ENCODE measurements at regions of chr4 and their contacts with region 1.

Region 1: DNA sequence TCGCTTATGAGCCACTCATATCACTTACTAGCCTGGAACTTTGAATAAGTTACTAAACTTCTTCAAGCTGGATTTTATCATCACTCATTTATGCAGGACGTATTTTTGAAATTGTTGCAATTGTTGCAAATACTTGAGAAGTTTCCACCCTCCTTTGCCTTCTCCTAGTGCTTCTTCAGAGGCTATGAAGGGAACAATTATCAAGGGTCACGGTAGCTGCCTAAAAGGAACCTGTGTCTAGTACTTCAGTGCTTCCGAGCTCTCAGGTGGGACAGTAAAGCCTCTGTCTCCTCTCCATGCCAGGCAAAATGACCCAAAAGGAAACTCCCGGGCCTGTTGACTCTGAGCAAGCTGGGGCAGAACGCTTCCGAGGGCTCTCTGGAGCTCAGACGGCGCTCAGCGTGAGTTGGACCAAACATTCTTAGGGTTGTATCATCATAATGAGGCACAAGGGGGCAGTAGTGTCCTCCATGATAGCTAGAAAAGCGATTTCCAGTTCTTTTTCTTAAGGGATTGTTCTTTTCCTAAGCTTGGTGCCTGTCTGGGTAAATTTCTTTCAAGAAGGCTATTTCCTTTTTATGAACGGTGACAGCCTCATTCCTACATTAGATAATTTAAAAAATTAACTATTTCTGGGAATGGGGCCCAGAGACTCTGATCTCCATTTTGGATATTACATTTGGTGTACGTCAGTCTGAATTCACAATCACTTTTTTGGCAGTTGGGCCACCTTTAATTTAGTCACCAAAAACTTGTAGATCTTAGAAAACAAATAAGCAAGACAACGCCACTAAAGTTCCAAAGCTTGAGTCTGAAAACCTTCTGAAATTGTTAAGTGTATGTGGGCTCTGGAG is 73.1 kb downstream of the PACRGL start:
- DNase-seq: peak; percentile 15
- ATAC-seq: peak; percentile 78; the same call in 1 of the 2 replicates
- H3K4me3 ChIP-seq: no peak overlapping the region
- H3K27ac ChIP-seq: no peak overlapping the region
- H3K4me1 ChIP-seq: no peaks in the 10 kb centered on the region
- H3K27me3 ChIP-seq: no peaks in the 10 kb centered on the region
- CTCF ChIP-seq: peak; percentile 73

Region 2: DNA sequence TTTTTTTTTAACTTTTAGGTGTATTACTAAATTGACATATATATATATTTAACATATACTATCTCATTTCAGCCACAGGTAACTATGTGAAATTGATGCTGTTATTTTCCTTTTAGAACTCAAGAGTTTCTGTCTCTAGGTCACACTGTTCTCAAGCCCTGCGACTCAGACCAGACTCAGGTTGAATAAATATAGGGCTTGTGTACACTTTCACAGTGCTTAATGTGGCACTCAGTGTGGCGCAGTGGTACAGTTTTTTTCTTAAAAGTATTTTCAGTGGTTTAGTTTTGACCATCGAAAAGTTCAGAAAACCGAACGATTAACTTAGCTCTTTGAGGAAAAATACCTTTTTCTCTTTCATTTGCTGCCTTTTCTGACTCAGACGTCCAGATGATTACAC is 48.5 kb before region 1 on chr4:
- CTCF ChIA-PET with region 1: no interaction called
- POLR2A ChIA-PET with region 1: no interaction called
- in situ Hi-C with region 1: no loop called
- intact Hi-C with region 1: no loop called
- DNase-seq: no peak
- ATAC-seq: no peak
- H3K4me3 ChIP-seq: no peak overlapping the region
- H3K27ac ChIP-seq: no peak overlapping the region
- H3K4me1 ChIP-seq: no peaks in the 10 kb centered on the region
- H3K27me3 ChIP-seq: no peaks in the 10 kb centered on the region
- CTCF ChIP-seq: no peak

Region 3: GRCh38 chr4:21134994-21135393 is 361.6 kb after region 1 on chr4:
- CTCF ChIA-PET with region 1: no interaction called
- POLR2A ChIA-PET with region 1: no interaction called
- in situ Hi-C with region 1: no loop called
- intact Hi-C with region 1: loop called (anchors 10 kb)
- DNase-seq: no peak
- ATAC-seq: no peak
- H3K4me3 ChIP-seq: no peak overlapping the region
- H3K27ac ChIP-seq: no peak overlapping the region
- H3K4me1 ChIP-seq: no peaks in the 10 kb centered on the region
- H3K27me3 ChIP-seq: no peaks in the 10 kb centered on the region
- CTCF ChIP-seq: peak; percentile 7; the same call in 1 of the 2 replicates

Region 4: DNA sequence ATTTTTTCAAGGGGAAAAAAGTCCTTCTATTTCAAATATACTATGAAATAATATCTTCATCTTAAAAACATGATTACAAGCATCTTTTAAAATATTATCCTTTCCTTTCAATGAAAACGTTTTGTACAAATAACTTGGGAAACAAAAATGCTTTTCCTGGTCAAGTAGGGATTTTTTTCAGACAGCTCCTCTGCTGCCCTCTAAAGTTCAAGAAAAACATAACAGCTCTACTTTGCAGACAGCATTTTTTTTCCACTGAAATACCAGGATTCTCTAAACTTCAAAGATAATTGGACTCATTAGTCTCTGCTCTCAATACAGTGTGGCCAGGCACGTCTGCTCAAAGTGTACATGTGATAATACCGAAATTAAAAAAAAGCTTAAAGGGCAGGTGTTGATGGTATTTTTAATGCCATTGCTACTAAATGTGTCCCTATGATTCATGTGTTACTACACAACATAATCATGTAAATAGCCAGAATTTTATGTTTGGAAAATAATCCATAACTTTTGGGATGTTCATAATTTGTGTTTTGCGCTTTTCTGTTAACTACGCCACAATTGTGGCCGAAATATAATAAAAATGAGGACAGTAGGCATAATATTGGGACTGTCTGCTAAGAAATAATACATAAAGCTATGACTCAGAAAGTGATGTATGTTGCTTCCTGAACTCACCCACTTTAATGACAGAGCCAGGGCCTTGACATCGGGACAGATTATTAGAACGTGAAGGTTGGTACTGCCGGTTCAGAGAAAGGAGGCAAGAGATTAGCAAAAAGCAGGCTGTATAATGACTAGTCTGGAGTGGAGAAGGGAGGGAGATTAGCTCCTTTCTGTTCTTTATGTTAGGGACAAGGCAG is 696.3 kb after region 1 on chr4:
- CTCF ChIA-PET with region 1: interaction called, 8 read pairs
- POLR2A ChIA-PET with region 1: no interaction called
- in situ Hi-C with region 1: no loop called
- intact Hi-C with region 1: loop called (anchors 2 kb)
- DNase-seq: peak; percentile 7
- ATAC-seq: no peak
- H3K4me3 ChIP-seq: no peak overlapping the region
- H3K27ac ChIP-seq: no peak overlapping the region
- H3K4me1 ChIP-seq: no peaks in the 10 kb centered on the region
- H3K27me3 ChIP-seq: no peaks in the 10 kb centered on the region
- CTCF ChIP-seq: peak; percentile 53; the same call in 1 of the 2 replicates

Region 5: GRCh38 chr4:21765810-21766407 is 992.5 kb after region 1 on chr4:
- CTCF ChIA-PET with region 1: no interaction called
- POLR2A ChIA-PET with region 1: no interaction called
- in situ Hi-C with region 1: no loop called
- intact Hi-C with region 1: loop called (anchors 10 kb)
- DNase-seq: peak; percentile 38
- ATAC-seq: 0 out of 2 replicates have a peak, but pooled peaks have one; percentile 62
- H3K4me3 ChIP-seq: no peak overlapping the region
- H3K27ac ChIP-seq: no peak overlapping the region
- H3K4me1 ChIP-seq: no peaks in the 10 kb centered on the region
- H3K27me3 ChIP-seq: no peaks in the 10 kb centered on the region
- CTCF ChIP-seq: peak; percentile 80